ENCODE measurements at regions of chr10 and their contacts with region 1.

Region 1: GRCh38 chr10:102917962-102918816 is at the start of gene CNNM2:
- DNase-seq: peak; percentile 100
- ATAC-seq: peak; percentile 91
- H3K4me3 Mint-ChIP-seq: peak within 1 kb of the TSS; percentile 92
- H3K27ac Mint-ChIP-seq: peak within 1 kb of the TSS; percentile 93
- H3K4me1 Mint-ChIP-seq: peaks cover 62% of the 10 kb centered on the region
- H3K27me3 Mint-ChIP-seq: no peaks in the 10 kb centered on the region
- total RNA-seq, gene CNNM2: 7.7 to 8.1 TPM

Region 2: DNA sequence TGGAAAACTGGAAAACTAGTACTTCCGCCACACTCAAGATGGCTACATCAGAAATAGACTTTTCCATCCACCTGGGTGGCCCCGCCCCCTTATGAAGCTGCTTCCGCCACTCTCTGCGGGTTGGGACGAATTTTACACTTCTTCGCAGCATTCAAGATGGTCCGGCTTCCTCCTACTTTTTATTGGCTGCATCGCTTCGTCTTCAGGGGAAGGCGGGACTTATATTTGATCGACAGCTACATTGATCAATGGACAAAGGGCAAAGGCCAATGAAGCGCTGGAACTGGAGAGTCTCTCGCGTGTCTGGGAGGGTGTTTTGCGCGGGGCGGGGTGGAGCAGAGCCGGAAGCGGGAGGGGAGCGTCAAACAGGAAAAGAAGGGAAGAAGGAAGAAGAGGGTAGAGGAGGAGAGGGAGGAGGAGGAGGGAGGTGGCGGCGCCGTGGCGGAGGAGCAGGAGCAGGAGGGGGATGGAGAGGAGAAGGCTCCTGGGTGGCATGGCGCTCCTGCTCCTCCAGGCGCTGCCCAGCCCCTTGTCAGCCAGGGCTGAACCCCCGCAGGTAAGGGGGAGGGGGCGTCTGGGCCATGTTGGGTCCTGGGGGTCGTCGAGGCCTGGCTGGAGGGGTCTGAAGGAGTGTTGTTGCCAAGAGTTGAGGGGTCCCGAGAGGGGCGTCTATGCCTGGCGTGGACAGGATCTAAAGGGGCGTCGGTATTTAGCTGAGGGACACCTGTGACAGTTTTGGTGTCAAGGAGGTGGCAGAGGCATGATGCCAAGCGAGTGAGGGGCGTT is 174.4 kb before region 1 on chr10 and contains the start of gene WBP1L:
- CTCF ChIA-PET with region 1: no interaction called
- POLR2A ChIA-PET with region 1: no interaction called
- DNase-seq: peak; percentile 97
- ATAC-seq: peak; percentile 99
- H3K4me3 Mint-ChIP-seq: peak within 1 kb of the TSS; percentile 100
- H3K27ac Mint-ChIP-seq: peak within 1 kb of the TSS; percentile 97
- H3K4me1 Mint-ChIP-seq: peaks cover 46% of the 10 kb centered on the region
- H3K27me3 Mint-ChIP-seq: no peaks in the 10 kb centered on the region
- total RNA-seq, gene WBP1L: 25.7 to 25.9 TPM

Region 3: DNA sequence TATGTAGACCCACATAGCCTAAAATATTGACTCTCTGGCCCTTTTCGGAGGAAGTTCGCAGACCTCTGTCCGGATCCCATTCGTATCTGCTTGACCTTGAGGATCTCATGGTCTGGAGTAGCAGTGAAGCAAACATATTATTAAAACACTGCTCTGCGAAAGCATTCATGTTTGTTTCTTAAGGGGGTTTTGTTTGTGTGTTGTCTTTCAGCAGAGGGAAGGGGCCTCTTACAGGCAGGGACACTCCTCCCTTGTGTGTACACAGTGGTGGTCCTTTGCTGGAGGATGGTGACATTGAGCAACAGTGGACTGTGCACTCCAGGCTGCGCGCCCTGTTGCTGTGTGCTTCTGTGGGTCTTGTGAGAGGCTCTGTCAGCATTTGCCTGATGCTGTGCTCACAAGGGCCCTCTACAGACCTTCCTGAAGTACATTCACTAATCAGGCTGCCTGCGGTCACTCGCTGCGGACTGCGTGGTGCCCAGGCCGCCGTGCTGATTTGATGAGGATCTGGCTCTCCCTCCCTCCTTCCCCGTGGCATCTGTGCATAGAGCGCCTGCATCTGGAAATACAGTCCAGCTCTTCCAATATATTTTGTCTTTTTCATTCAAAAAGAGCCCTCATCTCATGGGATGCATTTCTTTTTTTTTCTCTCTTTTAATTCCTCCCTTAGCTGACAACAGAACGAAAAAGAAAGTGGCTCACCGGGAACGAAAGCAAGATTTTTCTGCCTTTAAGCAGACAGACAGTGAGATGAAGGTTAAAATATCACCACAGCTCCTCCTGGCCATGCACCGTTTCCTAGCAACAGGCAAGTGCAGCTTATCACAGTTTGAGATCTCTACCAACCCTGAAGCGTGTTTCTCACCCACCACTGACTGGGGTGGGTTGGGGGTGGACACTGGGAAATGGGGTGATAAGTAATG is 135.7 kb after region 1 on chr10:
- CTCF ChIA-PET with region 1: interaction called, 25 read pairs
- POLR2A ChIA-PET with region 1: interaction called, 4 read pairs
- DNase-seq: peak; percentile 83
- ATAC-seq: peak; percentile 90
- H3K4me3 Mint-ChIP-seq: peak overlapping the region; percentile 79
- H3K27ac Mint-ChIP-seq: peak overlapping the region; percentile 90
- H3K4me1 Mint-ChIP-seq: peaks cover 32% of the 10 kb centered on the region
- H3K27me3 Mint-ChIP-seq: no peaks in the 10 kb centered on the region

Region 4: DNA sequence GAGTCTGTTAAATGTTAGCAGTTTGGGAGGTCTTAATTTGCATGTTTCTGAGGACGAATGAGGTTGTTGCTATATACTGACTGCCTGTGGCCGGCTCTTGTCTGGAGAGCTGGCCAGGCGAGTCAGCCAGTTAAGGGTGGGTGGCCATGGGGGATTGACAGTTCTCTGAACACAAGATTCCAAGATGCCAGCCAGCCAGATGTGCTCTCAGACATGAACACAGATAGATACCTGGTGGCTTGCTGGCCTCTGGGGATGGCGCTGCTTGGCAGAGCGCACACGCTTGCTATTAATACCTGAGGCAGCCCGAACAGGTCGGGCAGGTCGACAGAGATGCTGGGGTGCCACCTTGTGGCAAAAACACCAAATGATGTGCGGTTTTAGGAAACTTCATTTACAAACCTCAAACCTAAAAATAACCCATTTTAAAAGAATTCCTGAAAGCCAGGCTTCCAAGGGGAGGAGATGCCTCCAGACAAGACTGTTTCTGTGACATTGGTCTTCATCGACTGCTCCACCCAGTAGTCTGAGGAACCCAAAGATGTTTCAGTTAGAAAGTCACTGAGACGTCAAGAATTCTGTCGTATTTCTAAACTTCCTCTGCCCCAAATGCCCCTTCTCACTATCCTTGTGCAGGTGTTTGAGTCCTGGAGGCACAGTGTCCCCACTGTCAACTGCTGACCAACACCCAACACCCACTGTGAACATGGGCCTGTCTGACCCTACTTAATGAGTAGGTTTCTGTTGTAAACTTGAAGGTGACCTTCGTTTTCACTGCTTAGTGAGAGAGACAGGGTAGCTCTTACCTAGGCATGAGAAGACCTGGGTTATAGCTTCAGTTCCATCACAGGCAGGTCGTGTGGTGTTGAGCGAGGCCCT is 151.5 kb after region 1 on chr10:
- CTCF ChIA-PET with region 1: interaction called, 157 read pairs
- POLR2A ChIA-PET with region 1: interaction called, 17 read pairs
- DNase-seq: peak; percentile 82
- ATAC-seq: peak; percentile 85
- H3K4me3 Mint-ChIP-seq: peak overlapping the region; percentile 49
- H3K27ac Mint-ChIP-seq: peak overlapping the region; percentile 89
- H3K4me1 Mint-ChIP-seq: peaks cover 39% of the 10 kb centered on the region
- H3K27me3 Mint-ChIP-seq: no peaks in the 10 kb centered on the region

Region 5: GRCh38 chr10:103244663-103245271 is 326.6 kb after region 1 on chr10:
- CTCF ChIA-PET with region 1: interaction called, 46 read pairs
- POLR2A ChIA-PET with region 1: interaction called, 9 read pairs
- DNase-seq: peak; percentile 73
- ATAC-seq: peak; percentile 80
- H3K4me3 Mint-ChIP-seq: no peak overlapping the region
- H3K27ac Mint-ChIP-seq: no peak overlapping the region
- H3K4me1 Mint-ChIP-seq: peaks cover 19% of the 10 kb centered on the region
- H3K27me3 Mint-ChIP-seq: peaks cover 6% of the 10 kb centered on the region

Region 6: GRCh38 chr10:103333925-103334520 is 415.8 kb after region 1 on chr10:
- CTCF ChIA-PET with region 1: interaction called, 11 read pairs
- POLR2A ChIA-PET with region 1: no interaction called
- DNase-seq: no peak
- ATAC-seq: no peak
- H3K4me3 Mint-ChIP-seq: no peak overlapping the region
- H3K27ac Mint-ChIP-seq: no peak overlapping the region
- H3K4me1 Mint-ChIP-seq: no peaks in the 10 kb centered on the region
- H3K27me3 Mint-ChIP-seq: no peaks in the 10 kb centered on the region

Measured in activated CD8-positive, alpha-beta T cell treated with anti-CD3 and anti-CD28 coated beads, Interleukin-2, amount 10 ng/mL, durations not matched to agents 7 days and 5 days (primary cell).